ENCODE measurements at regions of chr19 and their contacts with region 1.

Region 1: GRCh38 chr19:8180061-8180460 is 29.1 kb upstream of the CERS4 start:
- DNase-seq: no peak
- ATAC-seq: no peak
- H3K4me3 Mint-ChIP-seq: no peak overlapping the region
- H3K27ac Mint-ChIP-seq: no peak overlapping the region
- H3K4me1 Mint-ChIP-seq: peaks cover 16% of the 10 kb centered on the region
- H3K27me3 Mint-ChIP-seq: no peaks in the 10 kb centered on the region
- CTCF ChIP-seq: no peak

Region 2: DNA sequence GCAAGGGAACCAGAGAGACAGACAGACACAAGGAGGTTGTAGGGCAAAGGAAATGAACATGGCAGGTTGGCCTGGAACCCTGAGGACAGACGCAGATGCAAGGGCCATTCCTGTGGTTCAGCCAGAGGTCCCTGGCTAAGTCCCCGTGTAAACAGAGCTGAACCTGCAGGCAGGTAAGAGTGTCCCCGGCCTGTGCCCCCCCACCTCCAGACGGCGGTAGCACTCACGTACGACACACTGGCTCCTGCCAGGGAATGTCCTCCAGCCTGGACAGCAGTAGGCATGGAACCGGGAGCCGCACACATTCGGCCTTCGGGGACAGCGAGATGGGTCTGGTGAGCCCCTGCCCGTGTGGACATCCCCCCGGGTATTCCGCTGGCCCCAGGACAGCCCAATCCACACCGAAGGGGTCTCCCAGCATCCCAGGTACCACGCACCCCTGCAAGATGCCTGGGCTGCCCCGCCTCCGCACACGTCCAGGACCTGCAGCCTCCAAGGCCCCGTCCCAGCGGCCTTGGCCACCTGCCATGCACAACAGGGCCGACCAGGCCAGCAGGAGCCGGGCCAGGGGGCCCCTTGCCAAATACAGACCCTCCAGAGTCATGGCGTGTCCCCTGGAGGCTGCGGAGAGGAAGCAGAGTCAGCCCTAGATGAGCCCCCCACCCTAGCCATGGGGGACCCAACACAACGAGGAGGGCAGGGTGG is 33.0 kb before region 1 on chr19:
- CTCF ChIA-PET with region 1: no interaction called
- POLR2A ChIA-PET with region 1: no interaction called
- intact Hi-C with region 1: no loop called
- DNase-seq: no peak
- ATAC-seq: no peak
- H3K4me3 Mint-ChIP-seq: no peak overlapping the region
- H3K27ac Mint-ChIP-seq: no peak overlapping the region
- H3K4me1 Mint-ChIP-seq: peaks cover 13% of the 10 kb centered on the region
- H3K27me3 Mint-ChIP-seq: peaks cover 46% of the 10 kb centered on the region
- CTCF ChIP-seq: no peak

Region 3: DNA sequence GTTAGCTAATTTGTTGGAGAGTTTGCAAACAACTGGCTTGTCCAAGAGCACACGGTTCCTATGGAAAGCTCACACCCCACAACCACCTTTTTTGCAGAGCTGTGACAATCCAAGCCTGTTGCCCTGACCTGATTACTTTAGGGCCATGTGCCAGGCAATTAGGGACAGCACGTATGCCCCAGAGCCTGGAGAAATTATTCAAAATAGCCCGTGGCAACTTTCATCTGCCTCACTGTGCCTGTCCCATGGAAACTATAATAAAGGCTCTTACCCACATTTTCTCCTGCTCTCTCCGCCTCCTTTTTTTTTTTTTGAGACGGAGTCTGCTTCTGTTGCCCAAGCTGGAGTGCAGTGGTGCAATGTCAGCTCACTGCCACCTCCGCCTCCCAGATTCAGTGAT is 12.1 kb before region 1 on chr19:
- CTCF ChIA-PET with region 1: no interaction called
- POLR2A ChIA-PET with region 1: interaction called, 5 read pairs
- intact Hi-C with region 1: loop called (anchors 2 kb)
- DNase-seq: no peak
- ATAC-seq: no peak
- H3K4me3 Mint-ChIP-seq: no peak overlapping the region
- H3K27ac Mint-ChIP-seq: no peak overlapping the region
- H3K4me1 Mint-ChIP-seq: peaks cover 3% of the 10 kb centered on the region
- H3K27me3 Mint-ChIP-seq: no peaks in the 10 kb centered on the region
- CTCF ChIP-seq: no peak

Measured in activated B cell treated with CpG ODN at 0.5 μM for 24 hours (primary cell).